ENCODE measurements at regions of chr9 and their contacts with region 1.

Region 1: DNA sequence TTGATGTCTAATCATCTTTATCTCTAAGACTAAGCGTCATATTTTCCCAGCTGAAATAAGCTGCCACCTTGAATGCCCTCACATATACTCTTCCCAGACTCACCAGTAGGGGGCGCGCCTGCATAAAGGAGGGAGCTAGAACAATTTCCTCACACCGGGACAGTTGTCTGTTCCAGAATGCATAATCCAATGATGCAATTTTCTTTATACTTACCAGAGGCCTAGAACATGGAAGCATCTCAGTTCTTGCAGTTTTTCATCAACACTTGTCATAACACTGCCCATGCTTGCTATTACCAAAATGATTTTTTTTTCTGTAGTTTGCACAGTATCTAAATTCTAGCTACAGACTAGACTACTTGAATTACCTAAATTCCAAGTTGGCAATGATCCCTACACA is 203.9 kb downstream of the FRMD3 start:
- DNase-seq: peak; percentile 75
- ATAC-seq: peak; percentile 84
- H3K4me3 ChIP-seq: no peak overlapping the region
- H3K27ac ChIP-seq: no peak overlapping the region
- H3K4me1 ChIP-seq: no peaks in the 10 kb centered on the region
- H3K27me3 ChIP-seq: no peaks in the 10 kb centered on the region
- CTCF ChIP-seq: peak; percentile 87

Region 2: GRCh38 chr9:83199243-83199642 is 135.1 kb before region 1 on chr9:
- CTCF ChIA-PET with region 1: no interaction called
- POLR2A ChIA-PET with region 1: no interaction called
- intact Hi-C with region 1: loop called (anchors 1 kb)
- DNase-seq: peak; percentile 56
- ATAC-seq: peak; percentile 91
- H3K4me3 ChIP-seq: no peak overlapping the region
- H3K27ac ChIP-seq: no peak overlapping the region
- H3K4me1 ChIP-seq: no peaks in the 10 kb centered on the region
- H3K27me3 ChIP-seq: peaks cover 22% of the 10 kb centered on the region
- CTCF ChIP-seq: peak; percentile 66

Region 3: GRCh38 chr9:83219152-83219923 is 115.0 kb before region 1 on chr9:
- CTCF ChIA-PET with region 1: no interaction called
- POLR2A ChIA-PET with region 1: no interaction called
- intact Hi-C with region 1: loop called (anchors 5 kb)
- DNase-seq: peak; percentile 59
- ATAC-seq: peak; percentile 90
- H3K4me3 ChIP-seq: peak overlapping the region; percentile 78
- H3K27ac ChIP-seq: no peak overlapping the region
- H3K4me1 ChIP-seq: peaks cover 12% of the 10 kb centered on the region; the same call in 1 of the 2 replicates
- H3K27me3 ChIP-seq: no peaks in the 10 kb centered on the region
- CTCF ChIP-seq: peak; percentile 34; the same call in 1 of the 2 replicates

Region 4: DNA sequence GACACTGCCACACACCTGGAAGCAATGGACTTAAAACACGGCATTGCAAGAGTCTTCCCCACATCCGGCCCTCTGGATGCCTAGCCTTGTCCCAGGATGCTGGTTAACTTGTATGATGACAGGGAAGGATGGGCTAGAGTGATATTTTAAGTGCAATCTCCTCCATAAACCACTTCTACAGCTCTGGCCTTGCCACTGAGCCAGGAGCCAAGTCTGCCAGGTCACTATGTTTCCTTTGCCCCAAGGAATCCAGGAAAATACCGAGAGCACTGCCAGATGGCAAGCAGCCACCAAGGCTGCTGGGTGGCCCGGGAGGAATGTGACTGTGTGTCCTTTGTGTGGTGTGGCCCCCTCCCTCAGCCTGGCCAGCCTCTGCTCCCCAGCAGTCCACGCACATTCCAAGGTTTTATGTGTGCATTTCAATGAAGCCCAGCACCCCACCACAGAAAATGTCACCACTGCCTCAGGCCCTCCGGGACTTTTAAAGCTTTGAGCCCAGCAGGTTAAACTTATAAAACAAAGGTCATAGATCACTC is 97.9 kb after region 1 on chr9:
- CTCF ChIA-PET with region 1: interaction called, 13 read pairs
- POLR2A ChIA-PET with region 1: no interaction called
- intact Hi-C with region 1: loop called (anchors 2 kb)
- DNase-seq: peak; percentile 95
- ATAC-seq: peak; percentile 86
- H3K4me3 ChIP-seq: peak overlapping the region; percentile 18; the same call in 1 of the 2 replicates
- H3K27ac ChIP-seq: peak overlapping the region; percentile 87
- H3K4me1 ChIP-seq: peaks cover 38% of the 10 kb centered on the region
- H3K27me3 ChIP-seq: no peaks in the 10 kb centered on the region
- CTCF ChIP-seq: no peak

Region 5: GRCh38 chr9:83473488-83473971 is 139.2 kb after region 1 on chr9:
- CTCF ChIA-PET with region 1: no interaction called
- POLR2A ChIA-PET with region 1: no interaction called
- intact Hi-C with region 1: loop called (anchors 10 kb)
- DNase-seq: peak; percentile 51
- ATAC-seq: 0 out of 2 replicates have a peak, but pooled peaks have one; percentile 8
- H3K4me3 ChIP-seq: no peak overlapping the region
- H3K27ac ChIP-seq: peak overlapping the region; percentile 94
- H3K4me1 ChIP-seq: peaks cover 61% of the 10 kb centered on the region
- H3K27me3 ChIP-seq: no peaks in the 10 kb centered on the region
- CTCF ChIP-seq: no peak

Region 6: DNA sequence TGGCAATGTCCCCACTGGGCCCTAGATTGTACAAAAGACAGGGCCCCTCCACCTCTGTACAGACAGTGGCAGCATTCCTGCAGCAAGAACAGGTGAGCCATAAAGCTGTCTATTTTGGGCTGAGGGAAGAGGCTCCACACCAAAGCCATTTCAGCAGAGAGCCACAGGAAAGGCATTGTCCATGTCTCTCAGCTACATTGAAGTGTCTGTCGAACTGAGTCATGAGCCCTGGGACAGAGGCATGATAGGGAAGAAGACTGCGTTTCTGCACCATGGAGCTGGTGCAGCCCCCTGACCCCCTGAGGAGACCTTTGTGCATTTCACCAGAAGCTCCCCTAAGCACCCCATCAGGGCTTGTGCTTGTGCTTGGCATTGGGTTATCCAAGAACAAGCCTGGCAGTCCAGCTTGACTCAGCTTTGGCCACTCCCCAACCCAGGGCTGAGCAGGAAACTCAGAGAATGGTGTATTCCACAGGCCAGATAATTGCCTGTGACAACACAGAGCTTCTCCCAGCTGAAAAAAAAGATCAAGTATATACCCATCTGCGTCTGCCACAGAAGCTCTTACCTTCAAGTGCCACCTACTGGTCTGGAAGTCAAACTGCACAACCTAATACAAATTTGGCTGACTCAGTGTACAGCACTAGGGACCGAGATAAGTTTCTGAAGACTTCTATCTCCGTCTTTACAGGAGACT is 209.8 kb after region 1 on chr9:
- CTCF ChIA-PET with region 1: interaction called, 17 read pairs
- POLR2A ChIA-PET with region 1: no interaction called
- intact Hi-C with region 1: loop called (anchors 1 kb)
- DNase-seq: peak; percentile 75
- ATAC-seq: peak; percentile 97
- H3K4me3 ChIP-seq: no peak overlapping the region
- H3K27ac ChIP-seq: no peak overlapping the region
- H3K4me1 ChIP-seq: no peaks in the 10 kb centered on the region
- H3K27me3 ChIP-seq: no peaks in the 10 kb centered on the region
- CTCF ChIP-seq: peak; percentile 74